ENCODE measurements at regions of chr5 and their contacts with region 1.

Region 1: GRCh38 chr5:166834246-166834645 is 1457.2 kb upstream of the WWC1 start:
- DNase-seq: no peak
- H3K4me3 ChIP-seq: no peak overlapping the region
- H3K27ac ChIP-seq: no peak overlapping the region
- H3K4me1 ChIP-seq: no peaks in the 10 kb centered on the region
- H3K27me3 ChIP-seq: no peaks in the 10 kb centered on the region
- CTCF ChIP-seq: no peak
- POLR2A ChIP-seq: no peak

Region 2: DNA sequence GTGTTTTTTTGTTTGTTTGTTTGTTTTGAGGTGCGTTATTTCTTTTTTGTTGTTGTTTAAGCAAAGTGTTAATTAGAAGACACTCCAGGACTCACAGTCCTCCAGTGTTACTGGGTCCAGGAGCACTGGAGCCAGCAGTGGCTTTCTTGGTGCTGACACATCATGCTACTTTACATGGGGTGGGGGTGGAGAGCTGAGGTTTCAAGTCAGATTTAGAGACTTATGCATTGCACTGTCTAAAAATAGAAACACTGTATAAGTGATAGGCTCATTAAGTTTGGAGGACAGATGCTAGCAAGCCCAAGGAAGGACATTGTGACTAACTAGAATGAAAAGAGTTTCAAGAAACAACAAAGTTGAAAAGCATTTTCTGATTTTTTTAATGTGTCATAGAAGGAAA is 1119.6 kb before region 1 on chr5:
- intact Hi-C with region 1: loop called (anchors 5 kb)
- DNase-seq: no peak
- H3K4me3 ChIP-seq: no peak overlapping the region
- H3K27ac ChIP-seq: no peak overlapping the region
- H3K4me1 ChIP-seq: no peaks in the 10 kb centered on the region
- H3K27me3 ChIP-seq: no peaks in the 10 kb centered on the region
- CTCF ChIP-seq: no peak
- POLR2A ChIP-seq: no peak

Measured in vagina (tissue), 2 donors.